PC-9 (cell line): ENCODE measurements at regions of chr12 and their contacts with region 1.

Region 1: DNA sequence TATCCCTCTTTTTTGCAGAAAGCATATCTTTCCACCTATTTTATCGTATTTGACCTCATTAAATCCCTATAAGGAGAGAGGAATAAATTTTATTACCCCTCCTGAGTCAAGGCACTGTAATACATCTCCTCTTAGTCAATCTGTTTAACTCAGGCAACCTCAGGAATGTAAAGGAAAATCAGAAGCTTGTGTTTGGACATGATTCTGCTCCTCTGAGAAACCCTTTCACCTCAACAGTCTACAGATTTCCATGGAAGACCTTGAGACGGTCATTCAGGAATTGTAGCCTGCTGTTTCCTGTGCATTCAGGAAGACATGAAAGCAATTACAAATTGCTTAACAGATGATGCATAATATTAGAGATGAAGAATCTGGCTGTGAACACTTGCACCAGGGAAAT is 360.8 kb downstream of the PAWR start:
- DNase-seq: no peak
- H3K4me3 ChIP-seq: no peak overlapping the region
- H3K27ac ChIP-seq: no peak overlapping the region
- H3K4me1 ChIP-seq: 0 out of 2 replicates have a peak, but pooled peaks cover 6% of the 10 kb centered on the region
- H3K27me3 ChIP-seq: no peaks in the 10 kb centered on the region
- CTCF ChIP-seq: no peak

Region 2: GRCh38 chr12:79200218-79200617 is 129.7 kb before region 1 on chr12:
- CTCF ChIA-PET with region 1: no interaction called
- POLR2A ChIA-PET with region 1: no interaction called
- intact Hi-C with region 1: loop called (anchors 10 kb)
- DNase-seq: no peak
- H3K4me3 ChIP-seq: no peak overlapping the region
- H3K27ac ChIP-seq: no peak overlapping the region
- H3K4me1 ChIP-seq: no peaks in the 10 kb centered on the region
- H3K27me3 ChIP-seq: no peaks in the 10 kb centered on the region
- CTCF ChIP-seq: no peak